AG04449 (cell line): ENCODE measurements at regions of chr19 and their contacts with region 1.

Region 1: DNA sequence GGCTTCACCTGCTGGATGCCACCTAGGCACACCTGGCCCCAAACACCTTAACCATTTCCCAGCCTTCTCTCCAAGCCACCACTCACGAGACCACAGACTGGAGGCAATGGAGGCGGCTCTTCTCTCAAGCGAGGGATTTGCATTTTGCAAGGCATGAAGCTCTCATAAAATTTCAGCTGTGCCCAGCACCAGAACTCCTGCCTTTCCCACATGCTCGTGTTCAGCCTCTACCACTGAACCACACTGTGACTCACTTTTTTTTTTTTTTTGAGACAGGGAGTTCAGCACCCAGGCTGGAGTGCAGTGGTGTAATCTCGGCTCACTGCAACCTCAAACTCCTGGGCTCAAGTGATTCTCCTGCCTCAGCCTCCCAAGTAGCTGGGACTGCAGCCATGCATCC is 10.6 kb downstream of the NANOS3 start:
- DNase-seq: no peak
- H3K4me3 ChIP-seq: no peak overlapping the region
- CTCF ChIP-seq: no peak

Region 2: GRCh38 chr19:13689085-13689484 is 198.4 kb before region 1 on chr19:
- CTCF ChIA-PET with region 1: no interaction called
- POLR2A ChIA-PET with region 1: no interaction called
- DNase-seq: no peak
- H3K4me3 ChIP-seq: no peak overlapping the region
- CTCF ChIP-seq: no peak

Region 3: DNA sequence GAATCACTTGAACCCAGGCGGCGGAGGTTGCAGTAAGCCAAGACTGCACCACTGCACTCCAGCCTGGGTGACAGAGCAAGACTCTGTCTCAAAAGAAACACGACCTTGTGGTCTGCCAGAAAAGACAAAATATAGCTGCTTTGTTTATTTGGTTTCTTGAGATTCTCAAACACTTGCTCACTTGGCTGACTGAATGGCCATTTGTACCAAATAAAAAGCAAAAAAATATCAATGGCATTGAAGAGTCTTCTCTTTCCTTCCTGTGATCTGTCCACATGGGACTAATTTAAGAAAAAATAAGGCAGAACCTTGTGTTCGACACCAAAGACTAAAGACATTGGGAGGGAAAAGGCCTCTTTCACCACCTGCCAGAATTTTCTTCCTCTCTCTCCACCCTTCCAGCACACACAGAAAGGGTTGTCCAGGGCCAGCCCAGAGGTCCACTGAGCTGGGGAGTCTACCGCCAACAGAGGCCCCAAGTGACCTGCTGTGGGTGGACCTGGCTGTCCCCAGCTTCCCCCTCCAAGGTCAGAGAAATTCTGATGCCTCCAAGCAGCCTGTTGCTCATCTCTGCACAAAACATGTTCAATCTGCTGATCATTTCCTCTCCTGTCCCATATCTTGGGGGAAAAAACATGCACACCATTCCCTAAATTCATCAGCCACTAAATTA is 12.5 kb after region 1 on chr19:
- CTCF ChIA-PET with region 1: interaction called, 10 read pairs
- POLR2A ChIA-PET with region 1: no interaction called
- DNase-seq: no peak
- H3K4me3 ChIP-seq: no peak overlapping the region
- CTCF ChIP-seq: no peak